Mammary epithelial cell (primary cell): ENCODE measurements at regions of chrX and their contacts with region 1.

Region 1: DNA sequence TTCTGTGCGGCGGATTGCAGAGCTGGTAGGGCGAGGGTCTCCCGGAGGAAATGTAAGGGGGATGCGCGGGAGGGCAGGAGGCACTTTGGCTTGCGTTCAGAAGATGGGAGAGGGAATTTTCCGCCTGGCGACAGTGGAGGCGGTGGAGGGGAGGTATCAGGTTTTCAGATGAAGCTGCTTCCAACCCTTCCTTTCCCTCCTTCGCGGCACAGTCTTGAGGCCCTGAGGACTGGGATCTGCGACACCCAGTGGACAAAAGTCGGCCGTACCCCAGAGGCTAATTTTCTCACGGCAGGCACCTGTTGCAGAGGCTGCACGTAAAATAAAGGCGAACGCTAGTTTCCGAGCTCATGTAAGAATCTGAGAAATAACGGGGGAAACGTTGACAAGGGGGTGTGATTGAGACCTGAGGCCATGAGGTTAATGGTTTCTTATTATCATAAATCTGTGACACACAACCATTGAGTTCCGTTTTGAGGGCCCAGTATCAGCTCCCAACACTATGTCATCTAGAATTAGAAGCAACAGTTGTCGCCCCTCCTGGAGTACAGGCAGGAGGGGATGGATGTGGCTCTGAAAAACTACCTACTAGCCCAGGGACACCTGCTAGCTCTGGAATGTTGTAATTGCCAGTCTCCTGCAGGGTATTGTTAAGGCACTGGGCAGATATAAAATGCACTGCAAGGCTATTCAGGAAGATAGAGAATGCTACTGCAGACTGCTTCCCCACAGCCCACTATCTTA is 1.1 kb downstream of the ZCCHC18 start:
- DNase-seq: peak; percentile 53
- H3K4me3 ChIP-seq: peak overlapping the region; percentile 30 to 67 (median 63)
- H3K27ac ChIP-seq: no peak overlapping the region
- H3K4me1 ChIP-seq: no peaks in the 10 kb centered on the region
- H3K27me3 ChIP-seq: no peaks in the 10 kb centered on the region
- CTCF ChIP-seq: peak; percentile 42 to 61

Region 2: DNA sequence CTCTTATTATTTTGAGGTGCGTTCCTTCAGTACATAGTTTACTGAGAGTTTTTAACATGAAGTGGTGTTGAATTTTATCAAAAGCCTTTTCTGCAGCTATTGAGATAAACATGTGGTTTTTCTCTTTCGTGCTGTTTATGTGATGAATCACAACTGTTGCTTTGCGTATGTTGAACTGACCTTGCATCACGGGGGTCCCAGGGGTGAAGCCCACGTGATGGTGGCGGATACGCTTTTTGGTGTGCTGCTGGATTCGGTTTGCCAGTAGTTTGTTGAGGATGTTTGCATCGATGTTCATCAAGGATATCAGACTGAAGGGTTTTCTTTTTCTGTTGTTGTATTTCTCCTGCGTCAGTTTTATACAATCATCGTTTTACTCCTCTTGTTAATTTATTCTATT is 95.3 kb before region 1 on chrX:
- CTCF ChIA-PET with region 1: no interaction called
- dilution Hi-C with region 1: loop called (anchors 25 kb)
- in situ Hi-C with region 1: no loop called
- intact Hi-C with region 1: no loop called
- DNase-seq: no peak
- H3K4me3 ChIP-seq: no peak overlapping the region
- H3K27ac ChIP-seq: no peak overlapping the region
- H3K4me1 ChIP-seq: no peaks in the 10 kb centered on the region
- H3K27me3 ChIP-seq: no peaks in the 10 kb centered on the region
- CTCF ChIP-seq: no peak

Region 3: GRCh38 chrX:104166738-104167436 is 53.5 kb after region 1 on chrX:
- CTCF ChIA-PET with region 1: no interaction called
- dilution Hi-C with region 1: no loop called
- in situ Hi-C with region 1: no loop called
- intact Hi-C with region 1: no loop called
- DNase-seq: no peak
- H3K4me3 ChIP-seq: peak overlapping the region; percentile 60 to 85 (median 66)
- H3K27ac ChIP-seq: no peak overlapping the region
- H3K4me1 ChIP-seq: peaks cover 2% of the 10 kb centered on the region
- H3K27me3 ChIP-seq: peaks cover under 1% of the 10 kb centered on the region
- CTCF ChIP-seq: no peak